ENCODE measurements at regions of chr3 and their contacts with region 1.

Region 1: GRCh38 chr3:50611464-50612233 is at the start of gene CISH:
- DNase-seq: peak; percentile 83 to 97 (median 90)
- ATAC-seq: peak; percentile 68
- H3K4me3 ChIP-seq: peak within 1 kb of the TSS; percentile 87
- H3K4me3 Mint-ChIP-seq: peak within 1 kb of the TSS; percentile 96
- H3K27ac ChIP-seq: peak within 1 kb of the TSS; percentile 79 to 89
- H3K27ac Mint-ChIP-seq: peak within 1 kb of the TSS; percentile 93
- H3K4me1 ChIP-seq: peaks cover 88% of the 10 kb centered on the region
- H3K4me1 Mint-ChIP-seq: peaks cover 77% of the 10 kb centered on the region
- H3K27me3 ChIP-seq: no peaks in the 10 kb centered on the region
- H3K27me3 Mint-ChIP-seq: no peaks in the 10 kb centered on the region
- CTCF ChIP-seq: peak; percentile 34
- total RNA-seq, gene CISH: 3.5 to 3.7 TPM

Region 2: GRCh38 chr3:50519471-50520089 is 92.1 kb before region 1 on chr3:
- CTCF ChIA-PET with region 1: no interaction called
- POLR2A ChIA-PET with region 1: no interaction called
- intact Hi-C with region 1: loop called (anchors 1 kb)
- DNase-seq: peak; percentile 56 to 82 (median 64)
- ATAC-seq: peak; percentile 93
- H3K4me3 ChIP-seq: no peak overlapping the region
- H3K4me3 Mint-ChIP-seq: no peak overlapping the region
- H3K27ac ChIP-seq: no peak overlapping the region
- H3K27ac Mint-ChIP-seq: no peak overlapping the region
- H3K4me1 ChIP-seq: peaks cover 12% of the 10 kb centered on the region
- H3K4me1 Mint-ChIP-seq: peaks cover 5% of the 10 kb centered on the region
- H3K27me3 ChIP-seq: no peaks in the 10 kb centered on the region
- H3K27me3 Mint-ChIP-seq: no peaks in the 10 kb centered on the region
- CTCF ChIP-seq: peak; percentile 85

Region 3: DNA sequence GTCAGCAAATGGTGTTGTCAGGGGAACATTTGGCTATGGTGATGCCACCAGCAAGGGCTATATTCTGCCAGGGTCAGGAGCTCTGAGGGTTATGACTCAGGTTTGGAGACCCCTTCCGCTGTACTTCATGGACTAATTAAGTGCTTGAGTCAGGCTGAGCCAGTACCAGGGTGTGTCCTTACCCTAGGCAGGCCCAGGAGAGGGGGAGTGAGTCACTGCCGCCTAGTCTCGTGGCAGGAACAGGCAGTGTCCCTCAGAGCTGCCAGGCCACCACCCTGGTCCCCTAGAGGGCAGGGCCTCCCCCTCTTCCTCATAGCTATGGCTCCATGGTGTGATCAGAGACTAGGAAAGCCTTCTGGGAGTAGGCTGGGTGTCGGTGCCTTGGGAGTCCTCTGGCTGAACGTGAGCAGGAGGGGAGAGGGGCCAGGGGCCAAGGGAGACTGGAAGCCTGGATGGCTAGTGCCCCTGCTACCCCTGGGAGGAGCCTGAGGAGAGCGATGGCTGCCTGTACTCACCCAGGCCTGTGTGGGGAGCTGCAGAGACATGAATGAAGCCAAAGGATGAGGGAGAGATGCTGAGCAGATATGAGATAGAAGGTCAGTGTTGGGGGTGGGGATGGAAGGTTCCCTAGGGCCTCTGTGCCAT is 15.9 kb after region 1 on chr3:
- CTCF ChIA-PET with region 1: interaction called, 10 read pairs
- POLR2A ChIA-PET with region 1: interaction called, 4 read pairs
- intact Hi-C with region 1: no loop called
- DNase-seq: peak in 2 of 14 experiments; percentile 64 to 78
- ATAC-seq: peak; percentile 13
- H3K4me3 ChIP-seq: no peak overlapping the region
- H3K4me3 Mint-ChIP-seq: no peak overlapping the region
- H3K27ac ChIP-seq: no peak overlapping the region
- H3K27ac Mint-ChIP-seq: peak overlapping the region; percentile 70
- H3K4me1 ChIP-seq: peaks cover 99% of the 10 kb centered on the region
- H3K4me1 Mint-ChIP-seq: peaks cover 89% of the 10 kb centered on the region
- H3K27me3 ChIP-seq: no peaks in the 10 kb centered on the region
- H3K27me3 Mint-ChIP-seq: no peaks in the 10 kb centered on the region
- CTCF ChIP-seq: no peak

Region 4: GRCh38 chr3:51024765-51025632 is 413.4 kb after region 1 on chr3:
- CTCF ChIA-PET with region 1: no interaction called
- POLR2A ChIA-PET with region 1: interaction called, 7 read pairs
- intact Hi-C with region 1: loop called in 1 of 2 experiments (anchors 10 kb)
- DNase-seq: peak; percentile 60 to 92 (median 76)
- ATAC-seq: peak; percentile 96
- H3K4me3 ChIP-seq: peak overlapping the region; percentile 32
- H3K4me3 Mint-ChIP-seq: peak overlapping the region; percentile 74
- H3K27ac ChIP-seq: peak overlapping the region; percentile 69
- H3K27ac Mint-ChIP-seq: peak overlapping the region; percentile 95
- H3K4me1 ChIP-seq: peaks cover 33% of the 10 kb centered on the region
- H3K4me1 Mint-ChIP-seq: peaks cover 66% of the 10 kb centered on the region
- H3K27me3 ChIP-seq: no peaks in the 10 kb centered on the region
- H3K27me3 Mint-ChIP-seq: no peaks in the 10 kb centered on the region
- CTCF ChIP-seq: no peak

Region 5: GRCh38 chr3:51384726-51385473 is 773.3 kb after region 1 on chr3 and contains the start of gene MANF:
- CTCF ChIA-PET with region 1: interaction called, 19 read pairs
- POLR2A ChIA-PET with region 1: interaction called, 16 read pairs
- intact Hi-C with region 1: loop called (anchors 2 to 5 kb)
- DNase-seq: peak; percentile 93 to 99 (median 95)
- ATAC-seq: peak; percentile 95
- H3K4me3 ChIP-seq: peak within 1 kb of the TSS; percentile 99
- H3K4me3 Mint-ChIP-seq: peak within 1 kb of the TSS; percentile 99
- H3K27ac ChIP-seq: peak within 1 kb of the TSS; percentile 84 to 96
- H3K27ac Mint-ChIP-seq: peak within 1 kb of the TSS; percentile 99
- H3K4me1 ChIP-seq: peaks cover 47% of the 10 kb centered on the region
- H3K4me1 Mint-ChIP-seq: peaks cover 55% of the 10 kb centered on the region
- H3K27me3 ChIP-seq: no peaks in the 10 kb centered on the region
- H3K27me3 Mint-ChIP-seq: no peaks in the 10 kb centered on the region
- CTCF ChIP-seq: no peak
- total RNA-seq, gene MANF: 26.4 to 30.2 TPM

Region 6: GRCh38 chr3:51670823-51671733 is 1059.4 kb after region 1 on chr3 and contains the start of gene TEX264:
- CTCF ChIA-PET with region 1: interaction called, 4 read pairs
- POLR2A ChIA-PET with region 1: no interaction called
- intact Hi-C with region 1: loop called in 1 of 2 experiments (anchors 5 kb)
- DNase-seq: peak; percentile 88 to 100 (median 95)
- ATAC-seq: peak; percentile 75
- H3K4me3 ChIP-seq: peak within 1 kb of the TSS; percentile 98
- H3K4me3 Mint-ChIP-seq: peak within 1 kb of the TSS; percentile 94
- H3K27ac ChIP-seq: peak within 1 kb of the TSS; percentile 83 to 91
- H3K27ac Mint-ChIP-seq: peak within 1 kb of the TSS; percentile 97
- H3K4me1 ChIP-seq: peaks cover 67% of the 10 kb centered on the region
- H3K4me1 Mint-ChIP-seq: peaks cover 80% of the 10 kb centered on the region
- H3K27me3 ChIP-seq: no peaks in the 10 kb centered on the region
- H3K27me3 Mint-ChIP-seq: no peaks in the 10 kb centered on the region
- CTCF ChIP-seq: no peak
- total RNA-seq, gene TEX264: 24.9 to 25.9 TPM

Measured in CD4-positive, alpha-beta T cell (primary cell).